Adrenal gland (tissue), 19 donors: ENCODE measurements at regions of chr7 and their contacts with region 1.

Region 1: DNA sequence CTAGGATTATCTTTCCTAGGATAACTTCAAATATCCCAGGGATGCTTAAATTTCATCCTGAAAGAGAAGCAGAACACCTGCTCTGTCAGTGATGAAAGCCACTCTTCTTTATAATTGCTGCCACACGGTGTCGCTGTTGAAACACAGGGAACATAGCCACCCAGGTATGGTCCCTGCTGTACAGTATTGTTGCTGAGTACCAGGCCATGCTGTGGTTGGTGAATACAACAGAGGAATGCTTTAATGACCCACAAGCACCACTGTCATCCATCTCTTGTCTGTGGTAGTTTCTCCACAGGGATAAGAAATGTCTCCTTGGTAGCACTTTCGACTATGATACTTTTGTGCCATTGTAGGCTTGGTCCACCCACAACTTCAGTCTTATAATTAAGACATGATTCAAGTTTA is 70.6 kb upstream of the STARD3NL start:
- DNase-seq: peak; percentile 36 to 87 (median 69)
- H3K4me3 ChIP-seq: no peak overlapping the region
- H3K27ac ChIP-seq: no peak overlapping the region
- H3K4me1 ChIP-seq: peaks cover 0 to 4% of the 10 kb centered on the region in 2 donors
- H3K27me3 ChIP-seq: no peaks in the 10 kb centered on the region
- CTCF ChIP-seq: peak; percentile 52 to 85 (median 72)
- POLR2A ChIP-seq: no peak

Region 2: DNA sequence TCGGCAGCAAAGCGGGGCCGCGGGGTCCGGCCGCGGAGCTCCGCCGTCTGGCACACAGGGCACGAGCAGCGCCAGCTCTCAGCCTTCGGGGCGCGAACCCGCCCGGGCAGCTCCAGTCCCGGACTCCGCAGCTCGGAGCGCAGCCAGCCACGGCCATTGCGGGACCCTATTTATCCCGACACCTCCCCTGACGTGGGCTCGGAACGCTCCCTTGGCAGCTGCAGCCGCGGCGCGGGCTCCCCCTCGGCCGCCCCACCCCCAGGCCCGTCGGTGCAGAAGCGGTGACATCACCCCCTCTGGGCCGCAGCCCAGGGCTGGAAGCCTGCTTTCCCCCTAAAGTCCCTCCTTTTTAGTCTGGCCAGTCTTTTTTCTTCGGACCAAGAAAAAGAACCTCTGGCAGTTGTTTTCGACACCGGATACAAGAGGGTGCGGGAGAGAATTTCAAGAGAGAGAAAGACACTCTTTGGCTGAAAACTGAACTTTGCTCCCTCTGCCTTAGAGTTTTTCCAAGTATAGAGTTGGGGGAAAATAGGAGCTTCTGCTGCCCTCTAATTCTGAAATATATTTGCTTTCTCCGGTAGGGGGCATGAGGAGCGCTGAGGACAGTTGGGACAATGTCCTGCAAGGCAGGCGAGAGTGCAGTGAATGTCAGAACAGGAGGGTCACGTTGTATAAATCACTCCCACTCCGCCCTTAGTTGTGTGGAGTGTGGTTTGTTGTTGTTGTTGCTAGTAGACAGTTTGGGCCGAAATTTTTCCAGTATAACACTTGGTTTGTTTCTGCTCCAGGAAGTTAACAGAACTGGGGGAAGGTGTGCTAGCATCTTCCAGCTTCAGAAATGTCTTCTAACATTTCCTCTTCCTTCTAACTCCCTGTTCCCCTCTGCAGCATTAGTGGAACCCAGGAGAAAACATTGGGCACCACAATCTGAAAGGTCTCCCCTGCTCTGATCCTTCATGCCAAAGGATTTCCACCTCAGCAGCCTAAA is 190.5 kb before region 1 on chr7 and contains the start of gene SFRP4:
- intact Hi-C with region 1: loop called in 1 of 2 experiments (anchors 10 kb)
- DNase-seq: peak; percentile 58 to 79 (median 72)
- H3K4me3 ChIP-seq: peak within 1 kb of the TSS in 3 of 4 donors; percentile 6 to 54 (median 52)
- H3K27ac ChIP-seq: peak within 1 kb of the TSS in 3 of 5 donors; percentile 51 to 73 (median 67)
- H3K4me1 ChIP-seq: peaks cover 23 to 33% of the 10 kb centered on the region in 2 donors
- H3K27me3 ChIP-seq: no peaks in the 10 kb centered on the region
- CTCF ChIP-seq: peak; percentile 60 to 85 (median 77)
- POLR2A ChIP-seq: no peak
- total RNA-seq, gene SFRP4: 1.1 to 16.3 (median 8.0) TPM

Region 3: GRCh38 chr7:38160003-38160571 is 52.6 kb after region 1 on chr7:
- intact Hi-C with region 1: no loop called
- DNase-seq: no peak
- H3K4me3 ChIP-seq: no peak overlapping the region
- H3K27ac ChIP-seq: no peak overlapping the region
- H3K4me1 ChIP-seq: no peaks in the 10 kb centered on the region
- H3K27me3 ChIP-seq: no peaks in the 10 kb centered on the region
- CTCF ChIP-seq: no peak
- POLR2A ChIP-seq: no peak

Region 4: DNA sequence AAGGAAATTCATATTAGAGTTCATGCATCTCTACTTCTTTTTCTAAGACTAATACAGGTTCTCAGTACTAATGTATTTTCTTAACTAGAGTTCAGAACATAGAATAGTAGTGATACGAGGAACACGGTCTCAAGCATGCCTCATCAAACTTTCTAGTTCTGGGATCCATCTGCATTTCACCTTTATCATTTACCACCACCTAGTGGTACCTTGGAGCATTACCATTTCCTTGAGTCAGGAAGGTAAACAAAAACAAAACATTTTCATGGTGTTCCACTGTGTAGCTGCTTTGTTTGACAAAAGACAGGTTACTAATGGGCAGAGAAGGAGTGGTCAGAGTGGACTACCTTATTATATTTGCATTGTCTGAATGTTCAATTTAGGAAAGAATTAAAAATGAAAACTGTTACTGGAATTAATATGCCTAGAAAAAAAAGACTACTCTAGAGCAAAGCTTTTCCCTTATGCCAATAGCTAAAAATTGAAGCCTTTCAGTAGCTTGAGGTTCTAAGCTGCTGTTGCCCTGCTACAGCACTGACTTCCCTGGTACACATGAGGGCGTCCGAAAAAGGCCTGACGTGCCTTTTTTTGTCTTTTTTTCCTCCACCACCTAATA is 115.1 kb after region 1 on chr7:
- intact Hi-C with region 1: loop called (anchors 5 kb)
- DNase-seq: peak in 3 of 7 donors; percentile 27 to 41 (median 31)
- H3K4me3 ChIP-seq: no peak overlapping the region
- H3K27ac ChIP-seq: no peak overlapping the region
- H3K4me1 ChIP-seq: no peaks in the 10 kb centered on the region
- H3K27me3 ChIP-seq: no peaks in the 10 kb centered on the region
- CTCF ChIP-seq: peak; percentile 83 to 96 (median 90)
- POLR2A ChIP-seq: no peak

Region 5: DNA sequence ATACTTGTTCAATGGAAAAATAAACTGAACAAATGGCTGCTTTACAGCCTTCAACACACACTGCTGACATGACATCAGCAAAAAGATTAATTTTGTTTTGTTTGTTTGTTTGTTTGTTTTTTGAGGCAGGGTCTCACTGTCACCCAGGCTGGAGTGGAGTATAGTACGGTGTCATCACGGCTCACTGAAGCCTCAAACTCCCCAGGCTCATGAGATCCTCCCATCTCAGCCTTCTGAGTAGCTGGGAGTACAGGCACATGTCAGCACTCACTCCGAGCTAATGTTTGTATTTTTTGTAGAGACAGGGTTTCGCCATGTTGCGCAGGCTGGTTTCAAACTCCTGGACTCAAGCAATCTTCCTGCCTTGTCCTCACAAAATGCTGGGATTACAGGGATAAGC is 155.1 kb after region 1 on chr7:
- intact Hi-C with region 1: no loop called
- DNase-seq: no peak
- H3K4me3 ChIP-seq: no peak overlapping the region
- H3K27ac ChIP-seq: no peak overlapping the region
- H3K4me1 ChIP-seq: no peaks in the 10 kb centered on the region
- H3K27me3 ChIP-seq: no peaks in the 10 kb centered on the region
- CTCF ChIP-seq: no peak
- POLR2A ChIP-seq: no peak

Region 6: GRCh38 chr7:38330861-38331621 is 223.6 kb after region 1 on chr7:
- intact Hi-C with region 1: no loop called
- DNase-seq: no peak
- H3K4me3 ChIP-seq: no peak overlapping the region
- H3K27ac ChIP-seq: no peak overlapping the region
- H3K4me1 ChIP-seq: peaks cover 3 to 4% of the 10 kb centered on the region in 2 donors
- H3K27me3 ChIP-seq: no peaks in the 10 kb centered on the region
- CTCF ChIP-seq: no peak
- POLR2A ChIP-seq: no peak

Region 7: GRCh38 chr7:38463277-38464225 is 356.1 kb after region 1 on chr7:
- intact Hi-C with region 1: no loop called
- DNase-seq: peak in 5 of 7 donors; percentile 12 to 77 (median 35)
- H3K4me3 ChIP-seq: no peak overlapping the region
- H3K27ac ChIP-seq: no peak overlapping the region
- H3K4me1 ChIP-seq: no peaks in the 10 kb centered on the region
- H3K27me3 ChIP-seq: no peaks in the 10 kb centered on the region
- CTCF ChIP-seq: no peak
- POLR2A ChIP-seq: no peak